Esophagus squamous epithelium (tissue), 5 donors: ENCODE measurements at regions of chr3 and their contacts with region 1.

Region 1: DNA sequence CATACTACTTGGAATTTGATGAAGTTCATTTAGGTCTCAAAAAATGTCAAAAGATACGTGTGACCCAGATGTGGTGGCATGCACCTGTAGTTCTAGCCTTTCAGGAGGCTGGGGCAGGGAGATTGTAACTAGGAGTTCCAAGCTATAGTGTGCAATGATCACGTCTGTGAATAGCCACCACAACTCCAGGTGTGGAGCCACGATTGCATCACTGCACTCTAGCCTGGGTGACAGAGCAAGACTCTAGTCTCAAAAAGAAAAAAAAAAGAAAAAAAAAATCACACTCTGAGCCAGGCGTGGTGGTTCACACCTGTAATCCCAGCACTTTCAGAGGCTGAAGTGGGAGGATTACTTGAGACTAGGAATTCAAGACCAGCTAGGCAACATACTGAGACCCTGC is 14.2 kb downstream of the MAP4 start:
- DNase-seq: no peak
- H3K4me3 ChIP-seq: no peak overlapping the region
- H3K27ac ChIP-seq: no peak overlapping the region
- H3K4me1 ChIP-seq: peaks cover 0 to 5% (median 0%) of the 10 kb centered on the region in 3 donors
- H3K27me3 ChIP-seq: no peaks in the 10 kb centered on the region
- CTCF ChIP-seq: no peak
- POLR2A ChIP-seq: no peak

Region 2: GRCh38 chr3:48069339-48069738 is 67.3 kb after region 1 on chr3:
- intact Hi-C with region 1: no loop called
- DNase-seq: no peak
- H3K4me3 ChIP-seq: no peak overlapping the region
- H3K27ac ChIP-seq: no peak overlapping the region
- H3K4me1 ChIP-seq: peaks cover 6 to 47% (median 12%) of the 10 kb centered on the region in 3 donors
- H3K27me3 ChIP-seq: no peaks in the 10 kb centered on the region
- CTCF ChIP-seq: no peak
- POLR2A ChIP-seq: no peak

Region 3: DNA sequence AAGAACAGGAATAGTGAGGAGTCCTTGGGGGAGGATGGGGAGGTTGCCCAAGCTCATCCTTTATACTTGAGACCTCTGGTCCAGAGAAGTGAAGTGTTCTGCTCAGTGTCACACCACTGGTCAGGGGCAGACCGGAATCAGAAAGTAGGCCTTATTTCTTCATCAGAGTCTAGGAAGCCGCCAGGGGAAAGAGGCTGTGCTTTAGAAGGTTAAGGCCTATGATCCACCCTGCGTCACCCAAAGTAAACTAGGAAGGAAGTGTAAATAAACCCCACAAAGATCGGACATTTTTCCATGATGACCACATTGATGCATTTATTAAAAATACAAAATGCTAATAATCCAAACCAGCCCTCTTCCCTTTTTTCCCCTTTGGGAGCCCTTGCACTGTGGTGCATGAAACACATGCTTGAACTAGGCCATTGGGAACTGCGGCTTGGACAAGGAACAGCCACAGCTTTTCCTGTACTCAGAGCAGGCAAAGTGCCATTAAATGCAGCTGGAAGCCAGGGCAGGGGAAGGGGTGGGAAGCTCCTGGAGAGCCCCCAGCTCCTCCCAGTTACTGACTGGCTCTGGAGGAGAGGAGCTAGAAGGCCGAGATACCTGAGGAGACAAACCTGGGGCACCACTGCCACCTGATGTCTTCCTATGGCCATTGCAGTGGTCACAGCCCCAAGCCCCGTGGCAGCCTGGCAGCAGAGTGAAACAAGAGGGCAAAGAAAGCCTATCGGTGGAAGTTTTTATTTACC is 149.2 kb after region 1 on chr3:
- intact Hi-C with region 1: loop called (anchors 10 kb)
- DNase-seq: peak; percentile 8
- H3K4me3 ChIP-seq: no peak overlapping the region
- H3K27ac ChIP-seq: peak overlapping the region in 3 of 4 donors; percentile 50 to 57 (median 57)
- H3K4me1 ChIP-seq: peaks cover 8 to 34% (median 14%) of the 10 kb centered on the region in 3 donors
- H3K27me3 ChIP-seq: no peaks in the 10 kb centered on the region
- CTCF ChIP-seq: peak; percentile 56 to 88 (median 77)
- POLR2A ChIP-seq: no peak